ENCODE measurements at regions of chr10 and their contacts with region 1.

Region 1: DNA sequence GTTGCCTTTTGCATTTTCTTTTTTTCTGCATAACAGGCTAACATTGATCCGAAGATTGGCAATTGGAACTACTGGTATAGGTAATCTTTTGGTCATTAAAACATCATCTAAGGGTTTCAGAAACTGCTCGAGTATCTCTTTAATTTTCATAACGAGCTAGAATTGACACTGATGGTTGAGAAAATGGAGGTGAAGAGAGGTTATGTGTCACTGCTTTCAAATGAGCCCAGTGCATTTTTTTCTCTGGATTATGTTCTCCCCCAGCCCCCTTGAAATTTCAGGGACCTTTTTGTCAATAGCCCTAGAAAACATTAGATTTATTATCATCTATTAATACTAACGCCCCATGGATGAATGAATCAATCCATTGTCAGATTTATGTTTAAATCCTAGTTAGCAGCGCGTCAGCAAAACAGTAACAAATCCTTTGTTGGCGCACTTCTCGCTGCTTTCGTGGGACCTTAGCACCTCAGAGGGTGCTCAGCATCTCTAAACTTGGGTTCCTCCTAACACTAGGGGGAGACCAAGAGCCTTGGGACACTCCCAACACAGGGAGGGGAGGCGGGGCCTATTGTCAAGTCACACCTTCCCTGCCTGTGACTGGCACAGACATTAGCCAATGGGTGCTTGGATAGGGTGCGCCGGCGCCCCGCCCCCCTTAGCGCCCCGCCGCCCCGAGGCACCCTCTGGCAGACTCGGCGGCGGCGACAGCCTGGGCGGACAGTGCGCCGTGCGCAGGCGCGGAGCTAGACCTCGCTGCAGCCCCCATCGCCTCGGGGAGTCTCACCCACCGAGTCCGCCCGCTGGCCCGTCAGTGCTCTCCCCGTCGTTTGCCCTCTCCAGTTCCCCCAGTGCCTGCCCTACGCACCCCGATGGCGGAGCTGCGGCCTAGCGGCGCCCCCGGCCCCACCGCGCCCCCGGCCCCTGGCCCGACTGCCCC is at the start of gene SUFU:
- DNase-seq: peak; percentile 95
- H3K4me3 Mint-ChIP-seq: no peak within 1 kb of the TSS
- H3K27ac Mint-ChIP-seq: peak within 1 kb of the TSS; percentile 77
- H3K4me1 Mint-ChIP-seq: peaks cover 22% of the 10 kb centered on the region
- H3K27me3 Mint-ChIP-seq: no peaks in the 10 kb centered on the region
- total RNA-seq, gene SUFU: 11.1 and 12.4 TPM in 2 replicates

Region 2: DNA sequence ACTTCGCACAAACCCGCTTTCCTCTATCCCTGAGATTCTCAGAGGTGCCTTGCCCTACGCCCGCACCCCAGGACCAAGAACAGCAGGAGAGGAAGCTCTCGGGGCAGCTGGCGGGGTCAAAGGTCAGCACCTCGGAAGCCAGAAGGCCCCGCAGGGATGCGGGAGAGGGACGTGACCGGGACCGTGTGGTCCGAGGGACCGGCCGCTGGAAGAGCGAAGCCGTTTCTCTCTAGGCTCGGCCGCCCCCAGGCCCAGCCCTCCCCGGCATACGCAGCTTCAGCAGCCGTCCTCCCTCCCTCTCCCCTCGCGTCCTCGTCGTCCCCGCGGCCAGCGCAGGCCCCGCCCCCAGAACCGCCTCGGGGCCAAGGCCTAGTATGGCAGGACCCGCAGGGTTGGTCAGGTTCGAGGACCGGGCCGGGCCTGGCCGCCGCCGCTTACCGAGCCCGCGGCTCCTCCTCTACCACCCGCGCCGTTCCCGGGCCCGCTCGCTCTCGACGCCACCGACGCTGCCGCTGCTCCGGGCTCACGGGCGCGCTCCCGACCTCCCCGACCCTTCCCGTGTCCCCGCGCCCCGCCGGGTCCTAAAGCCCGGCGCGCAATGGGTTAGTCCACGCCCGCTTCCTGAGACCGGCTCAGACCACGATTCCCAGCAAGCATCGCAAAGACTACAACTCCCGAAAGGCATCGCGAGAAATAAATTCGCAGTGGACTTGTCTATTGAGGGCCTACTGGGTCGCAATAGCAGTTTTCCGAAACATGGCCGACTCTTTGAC is 447.7 kb before region 1 on chr10 and contains the start of gene ARMH3:
- intact Hi-C with region 1: loop called (anchors 1 kb)
- DNase-seq: peak; percentile 90
- H3K4me3 Mint-ChIP-seq: peak within 1 kb of the TSS; percentile 94
- H3K27ac Mint-ChIP-seq: peak within 1 kb of the TSS; percentile 92
- H3K4me1 Mint-ChIP-seq: peaks cover 16% of the 10 kb centered on the region
- H3K27me3 Mint-ChIP-seq: no peaks in the 10 kb centered on the region
- total RNA-seq, gene ARMH3: 19.1 and 25.5 TPM in 2 replicates

Region 3: GRCh38 chr10:102245101-102245931 is 258.2 kb before region 1 on chr10 and contains the start of gene GBF1:
- intact Hi-C with region 1: loop called (anchors 2 kb)
- DNase-seq: peak; percentile 92
- H3K4me3 Mint-ChIP-seq: peak within 1 kb of the TSS; percentile 99
- H3K27ac Mint-ChIP-seq: peak within 1 kb of the TSS; percentile 92
- H3K4me1 Mint-ChIP-seq: peaks cover 39% of the 10 kb centered on the region
- H3K27me3 Mint-ChIP-seq: peaks cover 14% of the 10 kb centered on the region
- total RNA-seq, gene GBF1: 47.9 and 49.2 TPM in 2 replicates

Region 4: GRCh38 chr10:102255404-102255803 is 248.1 kb before region 1 on chr10:
- intact Hi-C with region 1: no loop called
- DNase-seq: no peak
- H3K4me3 Mint-ChIP-seq: no peak overlapping the region
- H3K27ac Mint-ChIP-seq: no peak overlapping the region
- H3K4me1 Mint-ChIP-seq: peaks cover 9% of the 10 kb centered on the region
- H3K27me3 Mint-ChIP-seq: no peaks in the 10 kb centered on the region

Region 5: GRCh38 chr10:102432162-102432950 is 71.2 kb before region 1 on chr10 and contains the start of gene CUEDC2:
- intact Hi-C with region 1: loop called (anchors 2 kb)
- DNase-seq: peak; percentile 96
- H3K4me3 Mint-ChIP-seq: peak within 1 kb of the TSS; percentile 92
- H3K27ac Mint-ChIP-seq: peak within 1 kb of the TSS; percentile 93
- H3K4me1 Mint-ChIP-seq: peaks cover 41% of the 10 kb centered on the region
- H3K27me3 Mint-ChIP-seq: no peaks in the 10 kb centered on the region
- total RNA-seq, gene CUEDC2: 60.7 and 67.5 TPM in 2 replicates

Region 6: GRCh38 chr10:102583435-102584417 is 80.2 kb after region 1 on chr10:
- intact Hi-C with region 1: loop called (anchors 1 kb)
- DNase-seq: peak; percentile 73
- H3K4me3 Mint-ChIP-seq: no peak overlapping the region
- H3K27ac Mint-ChIP-seq: no peak overlapping the region
- H3K4me1 Mint-ChIP-seq: peaks cover 3% of the 10 kb centered on the region
- H3K27me3 Mint-ChIP-seq: no peaks in the 10 kb centered on the region

Region 7: DNA sequence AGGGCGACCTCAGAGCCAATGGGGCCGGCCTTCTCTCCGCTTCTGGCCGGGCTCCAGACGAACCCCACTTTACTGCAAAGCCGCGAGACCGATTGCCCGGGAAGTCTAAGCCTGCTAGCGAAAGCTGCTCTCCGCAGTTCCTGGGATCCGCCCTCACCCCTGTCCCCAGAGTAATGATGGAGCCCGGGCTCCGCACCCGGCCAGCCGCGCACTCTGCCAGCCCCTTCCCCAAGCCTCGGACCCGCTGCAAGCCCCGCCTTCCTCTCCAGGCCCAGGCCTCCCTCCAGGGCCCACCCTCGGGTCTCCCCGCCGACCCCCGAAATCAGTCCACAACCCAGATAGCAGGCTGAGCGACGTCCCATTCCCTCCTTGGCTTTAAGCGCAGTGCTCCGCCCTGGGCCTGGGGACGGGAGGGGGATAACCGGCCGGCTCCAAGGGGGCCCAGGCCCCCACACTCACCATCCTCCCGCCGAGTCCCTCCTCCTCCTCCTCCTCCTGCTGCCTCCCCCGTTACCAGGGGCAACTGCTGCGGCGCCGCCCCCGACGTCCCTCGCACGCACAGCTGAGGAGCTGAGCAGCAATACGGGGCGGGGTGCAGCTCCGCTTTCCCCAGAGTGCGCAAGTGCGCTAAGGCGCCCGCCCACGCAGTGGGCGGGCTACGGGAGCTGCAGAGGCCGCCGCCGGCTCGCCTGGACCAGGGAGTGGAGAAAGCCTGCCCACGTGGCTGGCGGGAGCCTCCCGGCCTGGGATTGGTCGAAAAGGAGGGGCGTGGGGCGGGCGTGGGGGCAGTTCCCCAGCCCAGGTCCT is 210.5 kb after region 1 on chr10 and contains the start of gene ARL3:
- intact Hi-C with region 1: loop called (anchors 1 kb)
- DNase-seq: peak; percentile 96
- H3K4me3 Mint-ChIP-seq: peak within 1 kb of the TSS; percentile 92
- H3K27ac Mint-ChIP-seq: peak within 1 kb of the TSS; percentile 92
- H3K4me1 Mint-ChIP-seq: peaks cover 55% of the 10 kb centered on the region
- H3K27me3 Mint-ChIP-seq: no peaks in the 10 kb centered on the region
- total RNA-seq, gene ARL3: 11.1 and 12.2 TPM in 2 replicates

Measured in activated T-helper 2 cell treated with anti-CD3 and anti-CD28 coated beads, Interferon-gamma antibody, Interleukin-2, Interleukin-4, amounts not matched to agents 10 μg/mL and 5 μg/mL and 100 μg/mL, durations not matched to agents 14 hours and 24 hours and 36 hours (primary cell).